Activated T-helper 1 cell treated with anti-CD3 and anti-CD28 coated beads, Interleukin-12 subunit alpha, Interleukin-12 subunit beta, Interleukin-2, Interleukin-4 antibody, amounts not matched to agents 30 ng/mL and 10 ng/mL and 1 ng/mL, durations not matched to agents 14 hours and 24 hours and 36 hours (primary cell): ENCODE measurements at regions of chr1 and their contacts with region 1.

Region 1: GRCh38 chr1:5745776-5746610 is 246.2 kb downstream of the NPHP4 start:
- DNase-seq: peak; percentile 26
- H3K4me3 Mint-ChIP-seq: no peak overlapping the region
- H3K27ac Mint-ChIP-seq: no peak overlapping the region
- H3K4me1 Mint-ChIP-seq: no peaks in the 10 kb centered on the region
- H3K27me3 Mint-ChIP-seq: no peaks in the 10 kb centered on the region

Region 2: GRCh38 chr1:5514519-5515183 is 231.3 kb before region 1 on chr1:
- intact Hi-C with region 1: loop called (anchors 1 kb)
- DNase-seq: peak; percentile 37
- H3K4me3 Mint-ChIP-seq: no peak overlapping the region
- H3K27ac Mint-ChIP-seq: no peak overlapping the region
- H3K4me1 Mint-ChIP-seq: no peaks in the 10 kb centered on the region
- H3K27me3 Mint-ChIP-seq: peaks cover 6% of the 10 kb centered on the region

Region 3: DNA sequence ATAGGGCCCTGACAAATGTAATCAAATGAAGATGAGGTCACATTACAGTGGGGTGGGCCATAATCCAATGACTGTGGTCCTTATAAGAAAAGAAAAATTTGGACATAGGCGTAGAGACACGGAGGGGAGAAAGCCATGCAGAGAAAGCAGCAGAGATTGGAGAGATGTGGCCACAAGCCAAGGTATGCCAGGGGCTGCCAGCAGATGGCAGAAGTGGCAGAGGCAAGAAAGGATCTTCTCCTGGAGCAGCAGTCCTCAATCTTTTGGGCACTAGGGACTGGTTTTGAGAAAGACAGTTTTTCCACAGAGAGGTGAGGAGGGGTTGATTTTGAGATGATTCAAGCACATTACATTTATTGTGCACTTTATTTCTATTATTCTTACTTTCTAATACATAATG is 108.8 kb before region 1 on chr1:
- intact Hi-C with region 1: loop called (anchors 2 kb)
- DNase-seq: no peak
- H3K4me3 Mint-ChIP-seq: no peak overlapping the region
- H3K27ac Mint-ChIP-seq: no peak overlapping the region
- H3K4me1 Mint-ChIP-seq: no peaks in the 10 kb centered on the region
- H3K27me3 Mint-ChIP-seq: peaks cover 7% of the 10 kb centered on the region